ENCODE measurements at regions of chr17 and their contacts with region 1.

Region 1: DNA sequence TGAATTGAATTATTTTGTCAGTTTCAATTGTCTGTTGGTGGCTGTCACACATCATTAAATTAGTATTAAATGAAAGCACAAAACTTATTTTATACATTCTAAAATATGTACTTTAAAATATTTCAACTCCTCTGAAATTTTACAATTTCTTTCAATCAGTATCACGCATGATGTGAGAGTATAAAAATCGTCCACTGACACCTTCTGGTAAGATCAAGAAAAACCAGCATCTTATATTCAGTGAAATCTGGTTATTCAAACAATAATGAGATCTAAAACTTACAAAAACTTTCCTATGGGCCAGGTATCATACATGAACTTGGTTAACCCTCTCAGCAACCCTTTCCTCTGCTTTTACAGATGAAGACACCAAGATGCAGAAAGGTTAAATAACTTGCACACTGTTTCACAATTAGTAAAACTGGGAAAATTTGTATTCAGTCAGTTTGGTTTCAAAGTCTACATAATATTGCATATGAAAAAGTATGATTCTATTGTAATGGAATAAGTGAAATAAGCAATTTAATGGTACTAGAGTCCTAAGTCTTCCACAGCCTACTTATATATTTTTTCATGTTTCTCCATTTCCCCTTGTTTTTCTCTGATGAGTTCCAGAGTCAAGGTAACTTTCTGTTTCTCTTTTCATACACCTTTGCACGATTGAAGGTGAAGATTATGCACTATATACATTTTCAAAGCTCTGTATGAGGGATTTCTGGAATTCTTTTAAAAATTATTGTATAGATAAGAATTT is 58.7 kb downstream of the EFCAB5 start:
- DNase-seq: peak; percentile 30
- H3K4me3 ChIP-seq: no peak overlapping the region
- H3K27ac ChIP-seq: no peak overlapping the region
- H3K4me1 ChIP-seq: no peaks in the 10 kb centered on the region
- CTCF ChIP-seq: peak; percentile 75

Region 2: DNA sequence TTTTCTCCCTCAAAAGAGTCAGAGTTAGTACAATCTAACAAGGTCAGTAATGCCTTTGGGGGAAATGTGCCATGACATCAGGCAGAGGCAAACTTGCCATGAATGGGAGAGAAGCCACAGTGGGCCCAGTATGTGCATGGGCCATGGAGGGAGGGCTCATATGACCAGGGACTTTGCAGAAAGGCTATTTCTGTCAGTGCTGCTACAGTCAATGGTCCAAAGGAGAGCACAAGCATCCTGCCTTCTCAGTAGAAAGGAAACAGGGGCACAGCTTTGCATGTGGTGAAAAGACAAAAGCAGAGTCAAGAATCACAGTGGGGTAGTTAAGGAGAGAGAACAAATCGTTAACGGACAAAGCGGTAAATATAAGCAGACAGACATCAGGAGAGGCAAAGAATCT is 366.3 kb before region 1 on chr17:
- CTCF ChIA-PET with region 1: no interaction called
- POLR2A ChIA-PET with region 1: no interaction called
- intact Hi-C with region 1: loop called (anchors 10 kb)
- DNase-seq: no peak
- H3K4me3 ChIP-seq: no peak overlapping the region
- H3K27ac ChIP-seq: no peak overlapping the region
- H3K4me1 ChIP-seq: no peaks in the 10 kb centered on the region
- CTCF ChIP-seq: no peak

Region 3: GRCh38 chr17:29982991-29983653 is 17.1 kb before region 1 on chr17:
- CTCF ChIA-PET with region 1: no interaction called
- POLR2A ChIA-PET with region 1: no interaction called
- intact Hi-C with region 1: no loop called
- DNase-seq: no peak
- H3K4me3 ChIP-seq: no peak overlapping the region
- H3K27ac ChIP-seq: no peak overlapping the region
- H3K4me1 ChIP-seq: no peaks in the 10 kb centered on the region
- CTCF ChIP-seq: no peak